HepG2 (cell line): ENCODE measurements at regions of chr1 and their contacts with region 1.

Region 1: DNA sequence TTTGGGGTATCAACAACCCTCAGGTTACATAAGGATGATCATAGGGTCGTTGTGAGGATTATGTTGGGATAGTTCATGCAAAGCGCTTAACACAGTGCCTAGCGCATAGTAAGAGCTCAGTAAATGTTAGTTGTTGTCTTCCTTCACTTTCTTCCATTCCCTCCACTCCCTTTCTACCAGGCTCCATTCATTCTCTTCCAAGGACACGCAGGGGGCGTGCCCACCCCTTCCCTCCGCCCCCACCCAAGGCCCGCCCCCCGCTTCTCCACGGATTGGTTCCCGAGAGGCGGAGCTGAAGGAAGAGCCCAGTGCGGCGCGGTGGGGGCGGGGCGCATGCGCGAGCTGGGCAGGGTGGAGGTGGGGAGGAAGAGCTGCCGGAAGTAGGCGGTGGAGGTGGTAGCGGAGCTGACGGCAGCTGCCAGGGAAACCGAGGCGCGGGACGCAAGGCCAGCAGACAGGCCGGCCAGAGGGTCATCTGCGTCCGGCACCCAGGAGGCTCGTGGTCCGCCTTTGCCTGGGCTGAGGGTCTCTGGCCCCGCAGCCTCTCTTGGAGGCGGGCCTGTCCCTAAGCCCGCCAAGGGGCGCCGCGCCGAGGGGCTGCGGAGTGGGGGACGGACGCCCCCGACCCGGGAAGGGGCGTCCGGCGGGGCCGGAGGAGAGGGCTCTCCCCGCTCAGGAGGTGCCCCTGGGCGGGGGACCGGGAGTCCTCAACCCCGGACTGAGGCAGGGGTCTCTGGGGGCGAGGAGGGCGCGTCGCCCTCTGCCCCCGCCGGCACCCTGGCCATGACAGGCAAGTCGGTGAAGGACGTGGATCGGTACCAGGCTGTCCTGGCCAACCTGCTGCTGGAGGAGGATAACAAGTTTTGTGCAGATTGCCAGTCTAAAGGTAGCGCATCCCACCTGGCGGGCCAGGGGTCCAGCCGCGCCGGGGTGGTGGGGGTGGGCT is at the start of gene SMAP2:
- DNase-seq: peak; percentile 91
- ATAC-seq: peak; percentile 94
- H3K4me3 ChIP-seq: peak within 1 kb of the TSS; percentile 88 to 94 (median 93)
- H3K27ac ChIP-seq: peak within 1 kb of the TSS; percentile 76
- H3K4me1 ChIP-seq: peaks cover 37% of the 10 kb centered on the region
- H3K27me3 ChIP-seq: no peaks in the 10 kb centered on the region; a peak in 1 of 5 replicates
- CTCF ChIP-seq: no peak
- EP300 ChIP-seq: no peak
- POLR2A ChIP-seq: peak; percentile 32 to 82; a peak in 3 of 4 replicates
- RAD21 ChIP-seq: peak; percentile 35; the same call in 1 of the 2 replicates
- total RNA-seq, gene SMAP2: 19.0 and 21.2 TPM in 2 replicates

Region 2: DNA sequence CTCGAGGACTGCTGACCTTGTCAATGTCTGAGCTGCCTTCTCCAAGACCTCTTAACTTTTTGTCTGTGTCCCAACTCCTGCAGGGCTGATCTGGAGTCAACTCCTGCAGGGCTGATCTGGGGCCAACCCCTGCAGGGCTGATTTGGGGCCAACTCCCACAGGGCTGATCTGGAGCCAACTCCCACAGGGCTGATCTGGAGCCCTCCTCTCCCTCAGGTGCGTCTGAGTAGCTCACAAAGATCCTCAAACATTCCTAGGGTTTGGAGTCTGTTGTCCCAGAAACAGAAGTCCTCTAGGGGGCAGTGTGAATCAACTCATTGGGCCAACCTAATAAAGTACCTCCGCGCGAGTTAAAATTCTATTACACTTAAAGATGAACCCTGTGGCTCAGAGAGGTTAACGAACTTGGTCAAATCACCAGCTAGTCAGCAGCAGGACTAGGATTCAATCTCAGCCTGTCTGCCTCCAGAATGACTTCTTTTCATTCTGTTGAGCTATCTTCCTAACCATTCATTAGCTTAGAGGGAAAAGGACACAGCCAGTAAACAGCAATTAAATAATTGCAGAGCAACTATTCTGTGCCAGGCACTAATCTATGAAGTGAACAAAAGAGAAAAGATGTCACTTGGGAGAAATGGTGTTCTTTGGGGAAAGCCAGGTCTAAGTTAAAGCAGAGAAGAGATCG is 229.6 kb before region 1 on chr1:
- CTCF ChIA-PET with region 1: no interaction called
- POLR2A ChIA-PET with region 1: no interaction called
- in situ Hi-C with region 1: no loop called
- intact Hi-C with region 1: no loop called
- DNase-seq: peak; percentile 64
- ATAC-seq: peak; percentile 95
- H3K4me3 ChIP-seq: no peak overlapping the region
- H3K27ac ChIP-seq: no peak overlapping the region
- H3K4me1 ChIP-seq: peaks cover 19% of the 10 kb centered on the region
- H3K27me3 ChIP-seq: peaks cover 0 to 10% of the 10 kb centered on the region in 2 experiments; a peak in 2 of 5 replicates
- CTCF ChIP-seq: peak; percentile 82
- EP300 ChIP-seq: no peak
- POLR2A ChIP-seq: no peak
- RAD21 ChIP-seq: peak; percentile 65

Region 3: GRCh38 chr1:40224040-40224439 is 149.6 kb before region 1 on chr1:
- CTCF ChIA-PET with region 1: no interaction called
- POLR2A ChIA-PET with region 1: no interaction called
- in situ Hi-C with region 1: no loop called
- intact Hi-C with region 1: no loop called
- DNase-seq: no peak
- ATAC-seq: no peak
- H3K4me3 ChIP-seq: no peak overlapping the region
- H3K27ac ChIP-seq: no peak overlapping the region
- H3K4me1 ChIP-seq: no peaks in the 10 kb centered on the region
- H3K27me3 ChIP-seq: no peaks in the 10 kb centered on the region
- CTCF ChIP-seq: no peak
- EP300 ChIP-seq: no peak
- POLR2A ChIP-seq: no peak
- RAD21 ChIP-seq: no peak

Region 4: GRCh38 chr1:40385437-40386358 is 12.1 kb after region 1 on chr1:
- CTCF ChIA-PET with region 1: no interaction called
- POLR2A ChIA-PET with region 1: interaction called, 56 read pairs
- in situ Hi-C with region 1: no loop called
- intact Hi-C with region 1: no loop called
- DNase-seq: no peak
- ATAC-seq: no peak
- H3K4me3 ChIP-seq: no peak overlapping the region
- H3K27ac ChIP-seq: peak overlapping the region; percentile 81
- H3K4me1 ChIP-seq: peaks cover 92% of the 10 kb centered on the region
- H3K27me3 ChIP-seq: no peaks in the 10 kb centered on the region
- CTCF ChIP-seq: no peak
- EP300 ChIP-seq: no peak
- POLR2A ChIP-seq: no peak
- RAD21 ChIP-seq: no peak